Aorta (tissue), 5 donors: ENCODE measurements at regions of chr17 and their contacts with region 1.

Region 1: GRCh38 chr17:36148559-36149295 is 27.7 kb downstream of the TBC1D3B start:
- DNase-seq: peak; percentile 73 to 92
- ATAC-seq: peak; percentile 90
- H3K4me3 ChIP-seq: no peak overlapping the region
- H3K27ac ChIP-seq: no peak overlapping the region
- H3K4me1 ChIP-seq: no peaks in the 10 kb centered on the region
- H3K27me3 ChIP-seq: no peaks in the 10 kb centered on the region

Region 2: DNA sequence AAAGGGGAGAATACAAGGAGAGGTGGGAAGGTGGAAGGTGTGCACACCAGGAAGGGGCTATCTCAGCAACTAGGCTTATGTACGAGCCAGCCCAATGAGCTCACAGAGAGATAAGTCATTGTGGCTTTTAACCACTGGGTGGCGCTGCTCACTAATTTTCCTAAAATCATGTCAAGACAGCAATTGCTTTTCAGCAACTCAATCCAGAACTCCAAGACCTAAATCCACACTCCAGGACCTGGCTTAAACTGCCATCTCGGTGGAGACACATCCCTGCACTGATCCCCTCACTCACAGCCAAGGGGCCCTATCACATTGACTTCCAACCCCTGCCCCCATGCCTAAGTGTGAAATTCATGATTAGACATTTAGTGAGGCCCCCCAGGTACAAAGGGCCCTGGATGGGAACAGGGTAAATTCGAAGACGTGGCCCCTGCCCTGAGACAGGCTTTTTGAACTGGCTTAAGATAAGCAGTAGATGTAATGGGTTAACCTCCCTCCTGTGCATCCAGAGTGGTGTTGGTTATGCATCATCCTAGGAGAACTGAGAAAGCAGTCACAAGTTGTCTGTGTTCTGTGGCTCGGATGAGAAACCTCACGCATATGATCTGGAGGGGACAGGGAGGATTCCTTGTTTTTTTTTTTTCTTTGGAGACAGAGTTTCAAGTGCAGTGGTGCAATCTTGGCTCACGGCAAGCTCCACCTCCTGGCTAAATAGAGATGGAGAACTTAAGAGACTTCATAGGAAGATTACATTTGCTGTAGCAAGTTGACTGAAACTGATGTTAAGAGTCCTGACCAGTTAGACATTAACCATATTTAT is 179.0 kb before region 1 on chr17:
- intact Hi-C with region 1: loop called (anchors 10 kb)
- DNase-seq: peak; percentile 74 to 82
- ATAC-seq: peak; percentile 72
- H3K4me3 ChIP-seq: no peak overlapping the region
- H3K27ac ChIP-seq: no peak overlapping the region
- H3K4me1 ChIP-seq: no peaks in the 10 kb centered on the region
- H3K27me3 ChIP-seq: no peaks in the 10 kb centered on the region

Region 3: DNA sequence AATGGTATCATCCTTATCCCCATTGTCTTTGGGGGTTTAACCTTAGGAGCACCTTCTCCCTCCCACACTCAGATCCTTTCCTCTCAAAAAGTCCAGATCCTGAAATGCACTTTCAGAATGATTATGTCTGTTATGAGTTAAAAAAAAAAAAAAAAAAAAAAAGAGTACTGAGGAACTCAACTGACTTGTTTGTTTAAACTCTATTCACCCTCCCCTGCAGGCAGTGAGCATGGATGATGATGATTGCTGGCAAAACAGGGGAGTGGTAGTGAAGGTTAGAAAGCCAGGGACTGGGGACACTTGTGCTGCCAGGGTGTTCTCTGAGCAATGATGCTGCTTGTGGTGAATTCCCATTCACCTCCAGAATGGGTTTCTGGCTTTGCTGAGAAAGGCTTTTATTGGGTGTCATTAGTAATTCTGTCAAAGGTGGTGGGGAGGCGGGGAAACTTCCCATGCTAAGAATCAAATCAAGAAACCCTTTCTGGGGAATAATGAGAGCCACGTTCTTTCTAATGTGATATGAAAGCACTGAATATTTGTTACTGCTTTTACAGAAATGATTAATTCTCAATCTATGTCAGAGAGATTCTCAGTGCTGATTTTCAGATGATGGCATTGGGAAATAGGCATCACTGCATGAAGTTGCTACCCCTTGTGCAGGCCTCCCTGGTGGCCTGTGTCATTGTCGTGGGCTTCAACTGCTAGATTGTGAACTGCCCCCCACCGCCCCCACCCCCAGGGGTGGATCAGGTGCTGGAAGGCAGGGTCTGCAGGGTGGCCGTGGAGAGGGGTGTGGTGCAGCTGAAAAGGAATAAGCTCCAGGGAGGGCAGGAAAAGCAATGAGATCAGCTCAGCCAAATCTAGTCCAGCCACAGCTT is 31.0 kb before region 1 on chr17:
- intact Hi-C with region 1: loop called in 1 of 2 experiments (anchors 5 kb)
- DNase-seq: no peak
- ATAC-seq: no peak
- H3K4me3 ChIP-seq: no peak overlapping the region
- H3K27ac ChIP-seq: no peak overlapping the region
- H3K4me1 ChIP-seq: no peaks in the 10 kb centered on the region
- H3K27me3 ChIP-seq: no peaks in the 10 kb centered on the region